ENCODE measurements at regions of chr19 and their contacts with region 1.

Region 1: GRCh38 chr19:55653758-55654539 is 886 bp upstream of the U2AF2 start:
- DNase-seq: peak; percentile 95
- ATAC-seq: peak; percentile 83
- H3K4me3 ChIP-seq: peak overlapping the region; percentile 75
- H3K27ac ChIP-seq: peak overlapping the region; percentile 100
- H3K4me1 ChIP-seq: peaks cover 19% of the 10 kb centered on the region
- H3K27me3 ChIP-seq: no peaks in the 10 kb centered on the region
- CTCF ChIP-seq: peak; percentile 100; a peak in 5 of 6 replicates
- EP300 ChIP-seq: no peak
- POLR2A ChIP-seq: peak; percentile 80
- RAD21 ChIP-seq: peak; percentile 57; the same call in 1 of the 2 replicates

Region 2: DNA sequence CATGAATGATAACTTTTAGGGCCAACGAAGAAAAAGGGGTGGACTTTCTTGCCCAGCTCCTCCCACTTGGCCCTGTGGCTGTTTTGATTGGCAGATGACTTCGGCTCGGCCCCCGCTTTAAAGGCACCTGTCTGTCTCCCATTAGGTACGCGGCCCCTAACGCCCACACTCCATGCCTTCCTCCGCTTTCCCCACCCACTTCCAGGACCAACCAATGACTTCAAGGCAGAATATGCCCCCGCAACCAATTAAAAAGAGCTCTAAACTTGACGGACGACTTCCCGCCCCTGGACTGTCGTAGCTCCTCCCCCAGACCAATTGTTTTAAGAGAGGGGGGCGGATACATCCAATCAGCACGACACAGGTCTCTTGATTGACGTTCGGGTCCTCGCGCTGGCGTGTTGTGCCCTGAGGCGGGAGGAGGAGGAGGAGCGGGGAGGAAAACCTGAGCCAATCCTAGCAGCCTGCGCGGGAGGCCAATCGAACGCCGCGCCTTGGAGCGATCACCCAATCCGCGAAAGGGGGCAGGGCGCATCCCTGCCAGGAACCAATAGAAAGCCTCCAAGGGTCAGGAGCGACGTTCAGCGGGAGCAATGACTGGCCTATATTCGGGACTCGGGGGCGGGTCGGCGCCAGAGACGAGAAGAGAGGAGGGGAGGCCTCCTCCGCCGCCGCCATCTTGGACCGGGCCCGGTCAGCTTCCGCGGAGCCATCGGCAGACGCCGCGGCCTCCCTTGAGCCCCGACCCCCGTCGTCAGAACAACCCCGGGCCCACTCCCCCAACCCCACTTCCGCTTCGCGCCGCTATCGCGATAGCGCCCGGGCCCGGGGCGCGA is 1516.6 kb before region 1 on chr19 and contains the start of gene CNOT3:
- CTCF ChIA-PET with region 1: no interaction called
- POLR2A ChIA-PET with region 1: no interaction called
- RAD21 ChIA-PET with region 1: no interaction called
- SMC1A ChIA-PET with region 1: no interaction called
- in situ Hi-C with region 1: loop called (anchors 25 kb)
- intact Hi-C with region 1: no loop called
- DNase-seq: peak; percentile 100
- ATAC-seq: peak; percentile 92
- H3K4me3 ChIP-seq: peak within 1 kb of the TSS; percentile 91
- H3K27ac ChIP-seq: peak within 1 kb of the TSS; percentile 90
- H3K4me1 ChIP-seq: peaks cover 19% of the 10 kb centered on the region
- H3K27me3 ChIP-seq: no peaks in the 10 kb centered on the region
- CTCF ChIP-seq: no peak
- EP300 ChIP-seq: no peak
- POLR2A ChIP-seq: peak; percentile 91
- RAD21 ChIP-seq: no peak
- polyA plus RNA-seq, gene CNOT3: 0.14 to 0.62 TPM

Region 3: DNA sequence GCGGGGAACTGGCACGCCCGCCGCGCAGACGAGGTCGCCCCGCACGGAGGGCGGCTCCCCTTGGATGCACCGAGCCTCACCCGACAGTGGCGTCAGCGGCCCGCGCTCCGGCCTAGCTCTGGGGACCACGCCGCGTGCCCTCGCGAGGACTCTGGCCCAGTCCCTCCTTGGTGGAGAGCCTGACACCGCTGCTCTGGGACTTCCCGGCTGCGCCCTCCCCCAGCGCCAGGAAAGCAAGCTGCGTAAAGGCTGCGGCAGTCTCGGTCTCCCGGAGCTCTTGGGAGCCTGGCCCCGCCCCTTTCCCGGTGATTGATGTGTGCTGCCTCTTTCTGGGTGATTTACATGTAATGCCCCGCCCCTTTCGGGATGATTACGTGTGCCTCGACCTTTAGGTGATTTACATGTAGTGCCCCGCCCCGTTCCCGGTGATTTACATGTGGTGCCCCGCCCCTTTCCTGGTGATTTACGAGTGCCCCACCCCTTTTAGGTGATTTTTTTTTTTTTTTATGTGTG is 1190.4 kb before region 1 on chr19 and contains the start of gene LENG9:
- CTCF ChIA-PET with region 1: no interaction called
- POLR2A ChIA-PET with region 1: no interaction called
- RAD21 ChIA-PET with region 1: no interaction called
- SMC1A ChIA-PET with region 1: no interaction called
- in situ Hi-C with region 1: loop called (anchors 10 kb)
- intact Hi-C with region 1: no loop called
- DNase-seq: no peak
- ATAC-seq: peak; percentile 66
- H3K4me3 ChIP-seq: peak within 1 kb of the TSS; percentile 76
- H3K27ac ChIP-seq: peak within 1 kb of the TSS; percentile 81
- H3K4me1 ChIP-seq: peaks cover 12% of the 10 kb centered on the region
- H3K27me3 ChIP-seq: no peaks in the 10 kb centered on the region
- CTCF ChIP-seq: no peak
- EP300 ChIP-seq: no peak
- POLR2A ChIP-seq: peak; percentile 68
- RAD21 ChIP-seq: no peak
- polyA plus RNA-seq, gene LENG9: 0.18 to 1.7 TPM

Region 4: DNA sequence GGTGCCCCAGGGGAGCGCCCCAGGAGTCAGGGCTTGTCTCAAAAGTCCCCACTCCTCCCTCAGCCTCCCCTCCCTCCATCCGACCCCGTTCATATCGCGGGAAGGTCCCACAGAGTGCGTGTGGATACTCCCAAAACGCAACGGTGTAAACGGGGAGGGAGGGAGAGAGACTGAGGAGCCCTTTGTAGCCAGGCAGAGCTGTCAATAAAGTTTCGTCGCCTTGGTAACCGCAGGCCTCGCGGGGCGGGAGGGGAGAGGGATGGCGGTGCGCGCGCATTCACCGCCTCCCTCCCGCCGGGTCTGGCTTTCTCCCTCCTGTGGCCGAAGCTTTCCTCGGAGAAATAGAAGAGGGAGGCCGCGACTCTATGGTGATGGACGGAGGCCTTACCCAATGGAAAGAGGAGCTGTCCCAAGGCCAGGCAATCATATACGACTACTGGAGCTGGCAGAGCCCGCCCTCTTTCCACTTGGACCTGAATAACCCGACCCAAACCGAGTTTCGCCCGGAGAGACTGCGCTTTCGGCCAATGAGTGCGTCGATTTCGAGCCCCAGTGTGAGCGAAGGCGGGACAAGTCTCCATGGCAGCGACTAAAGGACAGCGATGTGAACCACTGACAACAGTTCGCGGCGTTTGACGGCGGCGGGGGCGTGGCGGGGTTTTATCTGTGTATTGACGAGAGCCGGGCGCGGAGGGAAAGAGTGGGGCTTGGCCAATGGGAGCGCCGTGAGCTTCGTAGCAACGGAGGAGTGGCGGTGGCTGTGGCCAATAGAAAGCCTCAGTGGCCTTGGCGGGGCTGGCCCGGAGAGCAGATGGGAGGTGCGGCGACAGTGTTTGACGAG is 314.7 kb before region 1 on chr19 and contains the start of gene KMT5C:
- CTCF ChIA-PET with region 1: no interaction called
- POLR2A ChIA-PET with region 1: no interaction called
- RAD21 ChIA-PET with region 1: no interaction called
- SMC1A ChIA-PET with region 1: no interaction called
- in situ Hi-C with region 1: no loop called
- intact Hi-C with region 1: no loop called
- DNase-seq: peak; percentile 100
- ATAC-seq: peak; percentile 93
- H3K4me3 ChIP-seq: peak within 1 kb of the TSS; percentile 85
- H3K27ac ChIP-seq: peak within 1 kb of the TSS; percentile 84
- H3K4me1 ChIP-seq: peaks cover 10% of the 10 kb centered on the region
- H3K27me3 ChIP-seq: no peaks in the 10 kb centered on the region; a peak in 1 of 4 replicates
- CTCF ChIP-seq: peak; percentile 11 to 19 (median 14); a peak in 3 of 6 replicates
- EP300 ChIP-seq: no peak
- POLR2A ChIP-seq: 0 out of 2 replicates have a peak, but pooled peaks have one; percentile 13
- RAD21 ChIP-seq: no peak
- polyA plus RNA-seq, gene KMT5C: 0.20 TPM in 1 of 2 experiments, not detected in the other

Region 5: DNA sequence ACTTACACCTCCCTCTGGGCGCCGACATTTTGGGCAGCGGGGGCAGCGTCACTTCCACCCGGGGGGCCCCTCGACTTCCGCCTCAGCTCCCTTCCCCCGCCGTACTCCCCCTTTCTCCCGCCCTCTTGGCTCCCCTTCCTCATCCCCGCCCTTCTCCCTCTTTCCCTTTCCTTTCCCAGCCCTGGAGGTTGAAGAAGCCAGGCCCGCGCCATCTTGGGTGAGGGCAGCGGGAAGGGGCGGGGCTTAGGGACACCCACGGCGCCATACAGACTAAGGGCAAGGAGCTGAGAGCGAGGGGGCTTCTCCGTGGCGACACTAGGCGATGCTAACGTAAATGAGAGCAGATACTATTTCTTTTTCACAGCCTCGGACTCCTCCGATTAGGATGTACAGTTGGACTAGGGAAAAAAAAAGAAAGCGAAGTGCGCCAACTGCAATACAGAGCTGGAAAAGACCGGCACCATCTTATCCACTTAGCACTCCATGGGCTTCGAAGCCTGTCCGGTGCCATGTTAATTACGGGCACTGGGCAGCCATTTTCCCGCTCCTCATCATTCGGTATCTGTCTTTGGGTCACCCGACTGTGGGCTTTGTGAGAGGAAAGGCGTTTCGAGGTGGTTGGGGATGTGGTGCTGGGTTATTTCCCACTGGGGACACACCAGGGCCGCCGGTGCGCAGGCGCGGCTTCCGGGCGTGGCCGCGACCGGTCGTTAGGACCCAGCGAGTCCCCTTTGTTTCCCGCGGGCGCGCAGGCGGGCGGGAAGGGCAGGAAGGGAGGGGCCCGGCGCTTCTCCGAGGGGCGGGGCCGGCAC is 54.3 kb before region 1 on chr19 and contains the start of gene FIZ1:
- CTCF ChIA-PET with region 1: interaction called, 11 read pairs
- POLR2A ChIA-PET with region 1: interaction called, 6 read pairs
- RAD21 ChIA-PET with region 1: interaction called, 5 read pairs
- SMC1A ChIA-PET with region 1: interaction called, 4 read pairs
- in situ Hi-C with region 1: no loop called
- intact Hi-C with region 1: no loop called
- DNase-seq: peak; percentile 95
- ATAC-seq: peak; percentile 89
- H3K4me3 ChIP-seq: peak within 1 kb of the TSS; percentile 88
- H3K27ac ChIP-seq: peak within 1 kb of the TSS; percentile 99
- H3K4me1 ChIP-seq: peaks cover 8% of the 10 kb centered on the region; the same call in 1 of the 2 replicates
- H3K27me3 ChIP-seq: no peaks in the 10 kb centered on the region
- CTCF ChIP-seq: no peak
- EP300 ChIP-seq: 0 out of 4 replicates have a peak, but pooled peaks of 1 of the 2 experiments have one; percentile 24
- POLR2A ChIP-seq: peak; percentile 74
- RAD21 ChIP-seq: no peak
- polyA plus RNA-seq, gene FIZ1: 0.60 to 1.5 TPM

Region 6: GRCh38 chr19:55643348-55644176 is 10.4 kb before region 1 on chr19 and contains the start of gene ZNF581:
- CTCF ChIA-PET with region 1: interaction called, 28 read pairs
- POLR2A ChIA-PET with region 1: interaction called, 11 read pairs
- RAD21 ChIA-PET with region 1: interaction called, 10 read pairs
- SMC1A ChIA-PET with region 1: interaction called, 4 read pairs
- in situ Hi-C with region 1: no loop called
- intact Hi-C with region 1: no loop called
- DNase-seq: peak; percentile 59
- ATAC-seq: peak; percentile 60
- H3K4me3 ChIP-seq: peak within 1 kb of the TSS; percentile 95
- H3K27ac ChIP-seq: peak within 1 kb of the TSS; percentile 64
- H3K4me1 ChIP-seq: peaks cover 36% of the 10 kb centered on the region
- H3K27me3 ChIP-seq: no peaks in the 10 kb centered on the region
- CTCF ChIP-seq: no peak
- EP300 ChIP-seq: no peak
- POLR2A ChIP-seq: peak; percentile 57
- RAD21 ChIP-seq: no peak
- polyA plus RNA-seq, gene ZNF581: 4.7 to 18.1 TPM

Region 7: GRCh38 chr19:55674841-55675660 is 21.1 kb after region 1 on chr19 and contains the start of gene EPN1:
- CTCF ChIA-PET with region 1: interaction called, 14 read pairs
- POLR2A ChIA-PET with region 1: interaction called, 7 read pairs
- RAD21 ChIA-PET with region 1: interaction called, 9 read pairs
- SMC1A ChIA-PET with region 1: interaction called, 15 read pairs
- in situ Hi-C with region 1: no loop called
- intact Hi-C with region 1: loop called (anchors 2 kb)
- DNase-seq: peak; percentile 74
- ATAC-seq: peak; percentile 64
- H3K4me3 ChIP-seq: peak within 1 kb of the TSS; percentile 92
- H3K27ac ChIP-seq: peak within 1 kb of the TSS; percentile 94
- H3K4me1 ChIP-seq: peaks cover 23% of the 10 kb centered on the region
- H3K27me3 ChIP-seq: no peaks in the 10 kb centered on the region
- CTCF ChIP-seq: no peak
- EP300 ChIP-seq: no peak
- POLR2A ChIP-seq: peak; percentile 72
- RAD21 ChIP-seq: no peak
- polyA plus RNA-seq, gene EPN1: 0.11 to 0.16 TPM